ENCODE measurements at regions of chr7 and their contacts with region 1.

Region 1: DNA sequence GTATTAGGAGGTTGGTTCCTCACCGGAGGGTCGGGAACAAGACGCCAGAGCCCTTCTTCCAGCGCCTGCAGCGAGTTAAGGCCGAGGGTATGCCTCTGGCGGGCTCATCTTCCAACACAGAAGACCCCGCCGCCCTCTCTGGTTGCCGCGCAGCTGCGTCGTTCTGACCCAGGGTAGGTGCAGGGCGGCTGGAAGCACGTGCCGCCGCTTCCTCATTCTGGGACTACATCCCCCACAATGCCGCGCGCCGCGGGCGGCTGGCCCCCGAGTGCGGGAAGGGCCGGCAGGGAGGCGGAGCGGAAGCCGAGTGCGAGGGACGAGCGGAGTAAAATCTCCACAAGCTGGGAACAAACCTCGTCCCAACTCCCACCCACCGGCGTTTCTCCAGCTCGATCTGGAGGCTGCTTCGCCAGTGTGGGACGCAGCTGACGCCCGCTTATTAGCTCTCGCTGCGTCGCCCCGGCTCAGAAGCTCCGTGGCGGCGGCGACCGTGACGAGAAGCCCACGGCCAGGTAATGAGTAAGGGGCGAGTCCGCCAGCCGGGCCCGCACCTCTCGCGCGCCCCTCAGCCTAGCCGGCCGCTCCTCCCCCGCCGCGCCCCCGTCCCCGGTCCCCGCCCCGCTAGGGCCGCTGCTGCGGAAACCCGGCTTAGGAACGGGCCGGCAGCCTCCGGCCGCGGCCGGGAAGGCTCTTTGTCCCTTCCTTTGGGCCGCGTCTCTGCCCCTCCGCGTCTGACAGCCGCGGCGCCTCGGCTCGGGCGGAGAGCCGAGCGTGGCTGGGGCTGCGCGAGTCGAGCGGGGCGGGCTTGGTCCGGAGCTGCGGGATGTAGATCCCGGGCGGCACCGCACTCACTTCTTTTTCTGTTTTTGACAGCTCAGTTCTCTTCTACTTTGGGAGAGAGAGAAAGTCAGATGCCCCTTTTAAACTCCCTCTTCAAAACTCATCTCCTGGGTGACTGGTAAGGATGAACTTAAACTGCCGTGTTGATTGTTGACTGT is at the start of gene CCDC126:
- DNase-seq: peak; percentile 83
- H3K4me3 Mint-ChIP-seq: peak within 1 kb of the TSS; percentile 83
- H3K27ac Mint-ChIP-seq: peak within 1 kb of the TSS; percentile 20
- H3K4me1 Mint-ChIP-seq: peaks cover 63% of the 10 kb centered on the region
- H3K27me3 Mint-ChIP-seq: no peaks in the 10 kb centered on the region
- total RNA-seq, gene CCDC126: 5.3 to 5.7 TPM

Region 2: GRCh38 chr7:22445140-22445743 is 1152.2 kb before region 1 on chr7:
- CTCF ChIA-PET with region 1: no interaction called
- intact Hi-C with region 1: loop called (anchors 5 kb)
- DNase-seq: peak; percentile 24
- H3K4me3 Mint-ChIP-seq: no peak overlapping the region
- H3K27ac Mint-ChIP-seq: no peak overlapping the region
- H3K4me1 Mint-ChIP-seq: peaks cover 18% of the 10 kb centered on the region
- H3K27me3 Mint-ChIP-seq: peaks cover 3% of the 10 kb centered on the region

Region 3: GRCh38 chr7:23181684-23182553 is 415.5 kb before region 1 on chr7 and contains the start of gene NUP42:
- CTCF ChIA-PET with region 1: no interaction called
- intact Hi-C with region 1: loop called (anchors 1 kb)
- DNase-seq: peak; percentile 98
- H3K4me3 Mint-ChIP-seq: peak within 1 kb of the TSS; percentile 99
- H3K27ac Mint-ChIP-seq: peak within 1 kb of the TSS; percentile 99
- H3K4me1 Mint-ChIP-seq: peaks cover 35% of the 10 kb centered on the region
- H3K27me3 Mint-ChIP-seq: no peaks in the 10 kb centered on the region
- total RNA-seq, gene NUP42: 15.2 to 17.0 TPM

Region 4: GRCh38 chr7:23373151-23374004 is 224.0 kb before region 1 on chr7:
- CTCF ChIA-PET with region 1: no interaction called
- intact Hi-C with region 1: loop called (anchors 1 kb)
- DNase-seq: peak; percentile 88
- H3K4me3 Mint-ChIP-seq: no peak overlapping the region
- H3K27ac Mint-ChIP-seq: peak overlapping the region; percentile 83
- H3K4me1 Mint-ChIP-seq: peaks cover 48% of the 10 kb centered on the region
- H3K27me3 Mint-ChIP-seq: peaks cover 6% of the 10 kb centered on the region

Region 5: GRCh38 chr7:23558303-23558702 is 39.1 kb before region 1 on chr7:
- CTCF ChIA-PET with region 1: no interaction called
- intact Hi-C with region 1: no loop called
- DNase-seq: no peak
- H3K4me3 Mint-ChIP-seq: no peak overlapping the region
- H3K27ac Mint-ChIP-seq: no peak overlapping the region
- H3K4me1 Mint-ChIP-seq: no peaks in the 10 kb centered on the region
- H3K27me3 Mint-ChIP-seq: peaks cover 3% of the 10 kb centered on the region

Region 6: DNA sequence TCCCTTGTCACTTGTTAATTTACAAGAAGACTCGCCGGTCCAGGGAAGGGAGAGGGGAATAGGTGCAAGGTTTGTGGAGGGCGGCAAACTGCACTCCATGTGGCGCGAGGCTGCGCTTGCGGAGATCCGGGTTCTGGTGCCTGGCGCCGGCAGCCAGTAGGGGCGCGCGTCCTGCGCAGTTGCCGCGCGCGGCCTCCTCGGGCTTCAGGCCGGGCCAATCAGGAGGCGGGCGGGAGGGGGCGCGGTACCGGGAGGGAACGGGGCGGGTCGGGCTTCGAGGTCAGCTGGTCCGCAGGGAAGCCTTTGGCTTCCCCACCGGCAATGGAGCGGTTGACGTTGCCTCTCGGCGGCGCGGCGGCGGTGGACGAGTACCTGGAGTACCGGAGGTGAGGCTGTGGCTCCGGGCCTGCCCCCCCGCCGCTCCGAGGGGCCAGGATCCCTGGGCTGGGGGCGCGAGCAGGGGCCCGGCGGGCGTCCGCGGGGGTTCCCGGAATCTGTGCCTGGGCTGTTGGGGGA is 82.6 kb after region 1 on chr7 and contains the start of gene FAM221A:
- CTCF ChIA-PET with region 1: interaction called, 5 read pairs
- intact Hi-C with region 1: loop called (anchors 1 kb)
- DNase-seq: peak; percentile 86
- H3K4me3 Mint-ChIP-seq: peak within 1 kb of the TSS; percentile 80
- H3K27ac Mint-ChIP-seq: peak within 1 kb of the TSS; percentile 66
- H3K4me1 Mint-ChIP-seq: peaks cover 11% of the 10 kb centered on the region
- H3K27me3 Mint-ChIP-seq: peaks cover 5% of the 10 kb centered on the region
- total RNA-seq, gene FAM221A: 8.7 to 10.0 TPM

Region 7: DNA sequence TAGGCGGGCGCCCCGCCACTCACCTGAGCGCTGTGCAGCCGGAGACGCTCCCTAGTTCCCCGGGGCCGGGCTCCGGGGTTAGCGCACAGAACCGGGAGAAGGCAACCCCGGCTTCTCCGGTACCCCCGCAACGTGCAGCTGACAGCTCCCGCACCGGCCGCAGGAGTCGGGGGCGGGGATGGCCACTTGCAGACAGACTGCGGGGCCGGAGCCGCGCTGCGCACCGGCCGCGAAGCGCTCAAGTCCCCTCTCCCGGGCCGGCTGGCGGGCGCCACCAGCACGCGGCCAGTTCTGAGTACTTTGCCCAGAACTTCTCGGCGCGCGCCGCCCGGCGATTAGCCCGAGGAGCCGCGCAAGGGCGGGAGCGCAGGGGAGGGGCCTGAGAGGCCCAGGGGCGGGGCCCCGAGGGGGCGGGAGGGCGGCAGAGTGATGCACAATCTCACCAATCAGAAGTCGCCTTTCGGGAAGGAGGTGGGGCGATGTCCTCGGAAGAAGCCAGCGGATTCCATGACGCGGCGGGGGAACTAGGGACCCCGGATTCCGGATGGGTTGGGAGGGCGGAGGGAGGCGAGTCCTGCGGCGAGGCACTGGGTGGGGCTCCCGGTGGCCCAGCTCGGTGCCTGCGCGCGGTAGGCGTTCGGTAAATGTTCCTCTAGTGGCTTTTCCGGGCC is 1382.6 kb after region 1 on chr7 and contains the start of gene OSBPL3:
- CTCF ChIA-PET with region 1: no interaction called
- intact Hi-C with region 1: loop called (anchors 2 kb)
- DNase-seq: peak; percentile 95
- H3K4me3 Mint-ChIP-seq: peak within 1 kb of the TSS; percentile 87
- H3K27ac Mint-ChIP-seq: peak within 1 kb of the TSS; percentile 85
- H3K4me1 Mint-ChIP-seq: peaks cover 47% of the 10 kb centered on the region
- H3K27me3 Mint-ChIP-seq: no peaks in the 10 kb centered on the region
- total RNA-seq, gene OSBPL3: 25.1 to 27.9 TPM

Measured in activated naive CD4-positive, alpha-beta T cell treated with anti-CD3 and anti-CD28 coated beads for 36 hours (primary cell).